ENCODE measurements at regions of chr5 and their contacts with region 1.

Region 1: DNA sequence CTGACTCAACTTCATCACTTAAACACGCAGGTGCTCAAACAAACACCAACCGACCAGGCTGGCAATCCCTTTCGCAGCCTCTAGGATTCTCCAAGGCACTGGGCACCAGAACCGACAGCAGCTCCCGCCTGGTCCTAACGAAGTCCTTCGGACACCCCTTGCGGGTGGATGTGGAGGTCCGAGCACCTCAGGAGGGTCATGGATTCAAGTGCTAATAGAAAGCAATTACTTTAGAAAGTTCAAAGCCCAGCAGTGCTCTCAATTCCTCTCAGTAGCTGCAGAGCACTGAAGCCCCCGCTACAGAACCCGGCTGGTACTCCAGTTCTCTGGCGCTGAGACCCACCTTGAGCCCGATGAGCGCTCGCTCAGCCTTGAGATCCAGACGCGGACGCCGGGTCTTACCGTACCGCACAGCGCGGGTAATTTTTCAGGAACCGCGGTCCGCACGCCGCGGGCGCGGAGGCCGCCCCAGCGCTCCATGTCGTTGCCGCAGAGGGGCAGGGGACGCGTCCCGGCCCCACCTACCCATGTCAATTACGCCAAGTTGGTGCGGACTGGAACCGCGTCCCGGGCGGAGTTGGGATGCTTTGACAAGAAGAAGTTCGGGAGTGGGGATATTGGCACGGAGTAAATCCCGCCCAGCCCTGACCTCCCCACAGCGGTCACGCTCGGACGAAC is 638 bp downstream of the MARCHF3 start:
- DNase-seq: peak; percentile 84
- H3K4me3 Mint-ChIP-seq: peak overlapping the region; percentile 85
- H3K27ac Mint-ChIP-seq: peak overlapping the region; percentile 28
- H3K4me1 Mint-ChIP-seq: peaks cover 13% of the 10 kb centered on the region
- H3K27me3 Mint-ChIP-seq: no peaks in the 10 kb centered on the region
- CTCF ChIP-seq: peak; percentile 53

Region 2: DNA sequence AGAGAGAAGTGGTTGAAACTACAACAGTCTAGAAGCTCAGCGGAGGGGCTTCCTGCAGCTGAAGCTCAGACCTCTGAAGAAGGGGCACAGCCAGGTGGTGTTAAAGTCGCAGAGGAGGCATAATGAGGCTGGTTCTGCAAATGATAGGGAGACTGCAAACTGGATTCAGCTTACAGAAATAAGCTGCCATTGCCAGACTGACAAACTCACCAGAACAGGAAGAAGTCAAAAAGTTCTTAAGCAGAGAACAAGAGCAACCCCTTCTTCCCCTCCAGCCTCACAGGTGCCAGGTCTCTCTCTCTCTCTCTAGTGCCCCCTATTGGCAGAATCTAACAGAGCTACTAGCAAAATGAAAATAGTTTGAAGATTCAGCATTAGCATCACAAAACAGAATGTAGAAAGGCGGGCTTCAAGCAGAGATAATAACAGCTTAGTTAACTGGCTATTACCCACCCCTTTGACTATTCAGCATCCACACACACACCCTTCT is 529.8 kb before region 1 on chr5:
- CTCF ChIA-PET with region 1: no interaction called
- intact Hi-C with region 1: no loop called
- DNase-seq: peak; percentile 34
- H3K4me3 Mint-ChIP-seq: no peak overlapping the region
- H3K27ac Mint-ChIP-seq: no peak overlapping the region
- H3K4me1 Mint-ChIP-seq: no peaks in the 10 kb centered on the region
- H3K27me3 Mint-ChIP-seq: no peaks in the 10 kb centered on the region
- CTCF ChIP-seq: peak; percentile 52

Region 3: DNA sequence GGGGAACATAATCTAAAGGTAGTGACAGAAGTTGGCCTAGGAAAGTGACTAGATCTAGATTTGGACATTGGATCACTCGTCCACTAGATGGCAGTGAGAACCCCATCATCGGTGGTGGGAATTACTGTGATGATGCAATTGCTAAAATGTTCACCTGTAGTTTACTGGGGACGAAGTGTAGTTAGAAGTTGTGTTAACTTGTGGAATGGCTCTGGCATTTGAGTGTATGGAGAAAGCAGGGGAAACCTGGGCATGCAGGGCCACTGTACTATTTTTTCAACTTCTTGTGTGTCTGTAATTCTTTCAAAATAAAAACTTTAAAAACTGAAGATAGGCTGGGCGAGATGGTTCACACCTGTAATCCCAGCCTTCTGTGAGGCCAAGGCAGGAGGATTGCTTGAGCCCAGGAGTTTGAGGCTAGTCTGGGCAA is 353.5 kb before region 1 on chr5:
- CTCF ChIA-PET with region 1: interaction called, 13 read pairs
- intact Hi-C with region 1: no loop called
- DNase-seq: peak; percentile 71
- H3K4me3 Mint-ChIP-seq: no peak overlapping the region
- H3K27ac Mint-ChIP-seq: no peak overlapping the region
- H3K4me1 Mint-ChIP-seq: peaks cover 16% of the 10 kb centered on the region
- H3K27me3 Mint-ChIP-seq: no peaks in the 10 kb centered on the region
- CTCF ChIP-seq: peak; percentile 74

Region 4: DNA sequence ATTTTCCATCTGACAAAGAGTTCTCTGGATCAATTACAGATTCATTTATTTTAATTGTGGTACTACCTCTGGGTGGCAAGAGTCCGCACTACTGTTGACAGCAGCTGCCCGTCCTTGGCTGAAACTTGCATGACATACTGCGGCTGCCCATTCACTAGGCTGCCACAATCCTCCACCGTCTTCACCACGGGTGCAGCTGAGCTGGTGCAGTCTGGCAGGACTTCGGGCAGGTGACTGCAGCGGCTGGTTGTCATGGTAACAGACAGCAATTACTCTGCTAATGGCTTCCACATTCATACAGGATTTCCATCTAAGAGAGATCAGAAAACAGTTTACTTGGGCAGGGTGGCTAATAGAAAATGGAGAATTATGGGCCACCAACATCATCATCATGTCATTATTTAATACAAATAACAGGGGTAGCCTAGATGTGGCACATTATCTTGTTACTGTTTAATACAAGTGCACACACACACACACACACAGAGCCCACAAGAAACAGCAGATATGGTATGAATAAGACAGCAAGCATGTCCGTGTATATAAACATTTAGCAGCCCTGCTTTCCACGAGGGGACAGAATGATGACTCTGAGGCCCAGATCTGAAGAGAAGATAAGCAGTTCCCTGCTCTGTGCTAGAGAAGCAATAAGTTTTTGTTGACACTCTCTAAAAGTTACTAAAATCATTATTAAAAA is 111.7 kb before region 1 on chr5:
- CTCF ChIA-PET with region 1: interaction called, 3 read pairs
- intact Hi-C with region 1: loop called (anchors 5 kb)
- DNase-seq: peak; percentile 67
- H3K4me3 Mint-ChIP-seq: peak overlapping the region; percentile 50
- H3K27ac Mint-ChIP-seq: peak overlapping the region; percentile 63
- H3K4me1 Mint-ChIP-seq: peaks cover 33% of the 10 kb centered on the region
- H3K27me3 Mint-ChIP-seq: no peaks in the 10 kb centered on the region
- CTCF ChIP-seq: no peak

Region 5: GRCh38 chr5:127001621-127002296 is 28.0 kb before region 1 on chr5:
- CTCF ChIA-PET with region 1: interaction called, 3 read pairs
- intact Hi-C with region 1: loop called (anchors 2 kb)
- DNase-seq: no peak
- H3K4me3 Mint-ChIP-seq: no peak overlapping the region
- H3K27ac Mint-ChIP-seq: peak overlapping the region; percentile 96
- H3K4me1 Mint-ChIP-seq: peaks cover 38% of the 10 kb centered on the region
- H3K27me3 Mint-ChIP-seq: no peaks in the 10 kb centered on the region
- CTCF ChIP-seq: no peak

Region 6: GRCh38 chr5:127492854-127493738 is 463.4 kb after region 1 on chr5:
- CTCF ChIA-PET with region 1: no interaction called
- intact Hi-C with region 1: no loop called
- DNase-seq: no peak
- H3K4me3 Mint-ChIP-seq: no peak overlapping the region
- H3K27ac Mint-ChIP-seq: no peak overlapping the region
- H3K4me1 Mint-ChIP-seq: no peaks in the 10 kb centered on the region
- H3K27me3 Mint-ChIP-seq: peaks cover 45% of the 10 kb centered on the region
- CTCF ChIP-seq: peak; percentile 95